ENCODE measurements at regions of chr11 and their contacts with region 1.

Region 1: DNA sequence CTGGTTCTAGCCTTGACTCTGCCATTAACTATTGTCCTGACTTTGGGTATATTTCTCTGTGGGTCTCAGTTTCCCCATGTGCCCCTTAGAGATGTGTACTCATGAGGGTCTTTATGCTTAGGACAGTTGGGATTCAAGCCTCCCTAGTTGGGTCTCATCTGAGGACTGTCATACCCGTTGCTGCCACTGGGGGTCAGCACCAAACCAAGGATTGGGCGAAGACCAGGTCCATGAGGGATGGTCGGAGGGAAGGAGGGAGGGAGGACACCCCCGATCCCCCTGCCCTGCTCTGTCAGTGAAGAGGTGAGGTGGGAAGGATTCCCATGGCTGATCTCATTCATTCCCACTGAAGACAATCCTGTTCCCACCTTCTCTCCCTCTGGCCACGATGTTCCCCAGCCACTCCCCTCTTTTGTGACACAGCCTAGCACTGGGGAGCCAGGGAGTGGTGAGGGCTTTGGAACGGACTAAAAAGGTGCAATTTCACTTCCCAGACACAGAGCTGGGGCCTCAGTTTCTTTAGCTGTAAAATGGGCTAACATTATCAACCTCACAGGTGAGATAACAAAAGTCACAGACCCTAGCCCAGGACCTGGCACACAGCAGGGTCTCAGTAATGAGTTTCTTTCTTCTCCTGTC is 12.4 kb upstream of the KLHL35 start:
- DNase-seq: peak; percentile 38 to 76 (median 66)
- ATAC-seq: peak; percentile 90
- H3K4me3 ChIP-seq: no peak overlapping the region
- H3K4me3 Mint-ChIP-seq: no peak overlapping the region
- H3K27ac ChIP-seq: no peak overlapping the region
- H3K27ac Mint-ChIP-seq: no peak overlapping the region
- H3K4me1 ChIP-seq: no peaks in the 10 kb centered on the region
- H3K4me1 Mint-ChIP-seq: peaks cover 0 to 3% (median 0%) of the 10 kb centered on the region in 7 donors
- H3K27me3 ChIP-seq: no peaks in the 10 kb centered on the region
- H3K27me3 Mint-ChIP-seq: no peaks in the 10 kb centered on the region

Region 2: DNA sequence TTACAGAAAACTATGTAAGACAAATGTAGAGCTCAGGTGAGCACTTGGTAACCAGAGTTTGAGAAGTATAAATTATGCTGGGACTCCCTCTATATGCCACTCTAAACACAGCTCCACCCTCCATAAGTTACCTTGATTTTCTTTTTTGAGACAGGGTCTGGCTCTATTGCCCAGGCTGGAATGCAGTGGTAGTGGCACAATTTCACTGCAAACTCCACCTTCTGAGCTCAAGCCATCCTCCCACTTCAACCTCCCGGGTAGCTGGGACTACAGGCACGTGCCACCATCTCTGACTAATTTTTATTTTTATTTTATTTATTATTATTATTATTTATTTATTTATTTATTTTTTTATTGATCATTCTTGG is 36.6 kb before region 1 on chr11:
- CTCF ChIA-PET with region 1: interaction called, 4 read pairs
- POLR2A ChIA-PET with region 1: no interaction called
- intact Hi-C with region 1: loop called in 1 of 2 experiments (anchors 1 kb)
- DNase-seq: no peak
- ATAC-seq: no peak
- H3K4me3 ChIP-seq: no peak overlapping the region
- H3K4me3 Mint-ChIP-seq: no peak overlapping the region
- H3K27ac ChIP-seq: no peak overlapping the region
- H3K27ac Mint-ChIP-seq: no peak overlapping the region
- H3K4me1 ChIP-seq: no peaks in the 10 kb centered on the region
- H3K4me1 Mint-ChIP-seq: peaks cover 0 to 31% (median 17%) of the 10 kb centered on the region in 7 donors
- H3K27me3 ChIP-seq: no peaks in the 10 kb centered on the region
- H3K27me3 Mint-ChIP-seq: no peaks in the 10 kb centered on the region